ENCODE measurements at regions of chr1 and their contacts with region 1.

Region 1: GRCh38 chr1:243596431-243597062 is 253.5 kb downstream of the AKT3 start:
- DNase-seq: peak; percentile 92
- H3K4me3 ChIP-seq: no peak overlapping the region
- H3K27ac ChIP-seq: peak overlapping the region; percentile 98
- H3K4me1 ChIP-seq: peaks cover 25% of the 10 kb centered on the region
- H3K27me3 ChIP-seq: no peaks in the 10 kb centered on the region
- CTCF ChIP-seq: no peak

Region 2: DNA sequence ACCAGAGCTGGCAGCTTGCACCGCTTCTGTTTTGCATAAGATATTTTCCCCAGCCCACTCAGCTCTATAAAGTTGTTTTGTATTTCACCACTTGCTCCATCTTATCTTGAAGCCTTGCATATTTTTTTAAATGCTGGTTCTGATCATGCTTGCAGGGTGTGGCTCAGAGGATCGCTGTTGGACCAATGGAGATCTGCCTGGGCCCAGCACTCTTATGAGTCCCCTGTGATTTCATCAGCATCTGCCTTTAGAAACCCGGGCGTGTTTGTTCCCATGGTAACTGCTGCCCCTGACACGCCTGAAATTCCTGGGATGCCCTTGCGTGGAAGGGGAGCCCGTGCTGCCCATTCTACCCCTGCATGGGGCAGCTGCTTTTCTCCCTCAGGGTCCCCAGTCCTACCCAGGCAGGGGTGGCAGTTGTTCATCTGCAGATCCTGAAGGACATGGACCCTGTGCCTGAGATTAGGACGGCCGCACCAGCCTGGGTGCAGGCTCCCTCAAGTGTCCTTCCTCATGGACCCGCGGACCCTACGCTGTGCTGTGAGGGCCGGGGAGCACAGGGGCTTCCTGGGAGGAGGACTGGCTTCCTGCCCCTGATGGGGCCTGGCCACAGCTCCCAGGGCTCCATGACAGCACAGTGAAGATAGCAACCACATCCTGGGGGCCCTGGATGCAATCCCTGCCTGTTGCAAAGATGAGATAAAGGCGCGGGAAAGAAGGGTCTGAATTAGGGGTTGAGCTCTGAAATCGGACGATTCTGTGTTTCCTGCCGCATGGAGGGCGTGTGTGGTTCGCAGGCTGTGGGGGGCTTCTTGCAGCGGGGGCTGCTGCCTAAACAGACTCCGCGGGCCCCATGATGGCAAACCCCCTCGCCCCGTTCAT is 114.2 kb before region 1 on chr1:
- CTCF ChIA-PET with region 1: interaction called, 3 read pairs
- dilution Hi-C with region 1: no loop called
- in situ Hi-C with region 1: no loop called
- intact Hi-C with region 1: loop called (anchors 5 kb)
- DNase-seq: peak; percentile 37
- H3K4me3 ChIP-seq: no peak overlapping the region
- H3K27ac ChIP-seq: peak overlapping the region; percentile 19
- H3K4me1 ChIP-seq: peaks cover 11% of the 10 kb centered on the region
- H3K27me3 ChIP-seq: no peaks in the 10 kb centered on the region
- CTCF ChIP-seq: no peak

Region 3: DNA sequence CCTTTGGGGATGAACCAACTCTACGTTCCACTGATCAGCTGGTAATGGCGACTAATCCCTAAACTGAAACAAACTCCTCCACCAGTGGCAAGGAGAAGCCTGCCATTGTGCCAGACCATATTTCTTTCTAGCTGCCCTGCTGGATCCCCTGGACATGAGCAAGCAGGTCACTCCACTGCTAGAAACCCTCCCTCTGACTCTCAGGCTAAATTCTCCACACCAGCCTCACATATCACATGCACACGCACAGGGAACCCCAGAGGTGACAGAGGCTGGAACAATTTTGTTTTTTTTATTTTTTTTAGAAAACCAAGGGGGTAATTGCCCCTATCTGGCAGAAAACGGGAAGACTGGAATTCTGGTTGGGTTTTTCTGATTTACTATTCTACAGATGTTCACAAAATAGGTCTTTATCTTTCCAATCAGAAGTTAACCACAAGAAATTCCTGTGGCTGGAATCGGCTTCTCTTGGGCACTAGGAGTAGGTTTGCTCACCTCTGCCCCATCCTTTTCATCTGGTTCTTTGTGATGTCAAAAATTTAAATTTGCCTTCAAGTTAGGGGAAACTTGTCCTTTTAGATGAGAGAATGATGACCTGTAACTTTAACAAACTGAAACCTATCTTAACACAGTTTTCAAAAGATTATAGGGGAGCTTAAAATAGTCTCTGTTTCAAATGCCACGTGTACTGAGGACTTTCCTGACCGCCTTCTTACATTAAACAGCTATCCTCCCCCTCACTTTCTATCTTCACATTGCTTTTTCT is 82.6 kb before region 1 on chr1:
- CTCF ChIA-PET with region 1: no interaction called
- dilution Hi-C with region 1: no loop called
- in situ Hi-C with region 1: no loop called
- intact Hi-C with region 1: loop called (anchors 5 kb)
- DNase-seq: peak; percentile 70
- H3K4me3 ChIP-seq: no peak overlapping the region
- H3K27ac ChIP-seq: no peak overlapping the region
- H3K4me1 ChIP-seq: peaks cover 15% of the 10 kb centered on the region
- H3K27me3 ChIP-seq: no peaks in the 10 kb centered on the region
- CTCF ChIP-seq: no peak

Region 4: DNA sequence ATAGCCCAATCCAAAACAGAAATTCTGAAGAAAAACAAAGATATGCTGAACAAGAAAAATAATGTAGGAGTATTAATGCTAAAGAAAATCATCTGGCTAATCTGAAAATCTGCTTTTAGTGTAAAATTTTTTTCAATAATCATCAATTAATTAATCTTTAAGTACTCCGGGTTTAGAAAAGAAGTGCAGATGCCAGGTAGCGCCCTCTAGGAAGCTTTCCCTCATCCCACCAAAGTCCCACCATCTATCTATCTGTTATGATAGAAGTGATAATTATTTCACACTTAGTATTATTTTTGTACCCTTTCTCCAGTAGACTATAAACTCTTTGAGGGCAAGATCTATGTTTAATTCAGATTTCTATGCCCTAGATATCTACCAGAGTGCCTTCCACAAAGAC is 13.2 kb after region 1 on chr1:
- CTCF ChIA-PET with region 1: no interaction called
- dilution Hi-C with region 1: no loop called
- in situ Hi-C with region 1: no loop called
- intact Hi-C with region 1: no loop called
- DNase-seq: no peak
- H3K4me3 ChIP-seq: no peak overlapping the region
- H3K27ac ChIP-seq: no peak overlapping the region
- H3K4me1 ChIP-seq: no peaks in the 10 kb centered on the region
- H3K27me3 ChIP-seq: no peaks in the 10 kb centered on the region
- CTCF ChIP-seq: no peak

Region 5: DNA sequence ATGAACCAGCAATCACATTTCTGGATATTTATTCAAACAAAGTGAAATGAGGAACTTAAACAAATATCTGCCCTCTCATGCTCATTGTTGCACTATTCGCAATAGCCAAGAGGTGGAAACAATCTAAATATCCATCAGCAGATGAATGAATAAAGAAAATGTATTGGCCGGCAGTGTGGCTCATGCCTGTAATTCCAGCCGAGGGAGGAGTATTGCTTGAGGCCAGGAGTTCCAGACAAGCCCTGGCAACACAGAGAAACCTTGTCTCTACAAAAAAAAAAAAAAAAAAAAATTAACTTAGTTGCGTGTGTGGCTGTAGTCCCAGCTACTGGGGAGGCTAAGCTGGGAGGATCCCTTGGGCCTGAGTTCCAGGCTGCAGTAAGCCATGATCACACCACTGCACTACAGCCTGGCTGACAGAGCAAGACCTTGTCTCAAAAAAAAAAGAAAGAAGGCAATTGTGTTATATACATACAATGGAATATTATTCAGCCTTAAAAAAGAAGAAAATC is 62.1 kb after region 1 on chr1:
- CTCF ChIA-PET with region 1: no interaction called
- dilution Hi-C with region 1: no loop called
- in situ Hi-C with region 1: no loop called
- intact Hi-C with region 1: loop called (anchors 5 kb)
- DNase-seq: peak; percentile 84
- H3K4me3 ChIP-seq: no peak overlapping the region
- H3K27ac ChIP-seq: peak overlapping the region; percentile 64
- H3K4me1 ChIP-seq: peaks cover 15% of the 10 kb centered on the region
- H3K27me3 ChIP-seq: no peaks in the 10 kb centered on the region
- CTCF ChIP-seq: no peak